HCT116 (cell line): ENCODE measurements at regions of chr13 and their contacts with region 1.

Region 1: DNA sequence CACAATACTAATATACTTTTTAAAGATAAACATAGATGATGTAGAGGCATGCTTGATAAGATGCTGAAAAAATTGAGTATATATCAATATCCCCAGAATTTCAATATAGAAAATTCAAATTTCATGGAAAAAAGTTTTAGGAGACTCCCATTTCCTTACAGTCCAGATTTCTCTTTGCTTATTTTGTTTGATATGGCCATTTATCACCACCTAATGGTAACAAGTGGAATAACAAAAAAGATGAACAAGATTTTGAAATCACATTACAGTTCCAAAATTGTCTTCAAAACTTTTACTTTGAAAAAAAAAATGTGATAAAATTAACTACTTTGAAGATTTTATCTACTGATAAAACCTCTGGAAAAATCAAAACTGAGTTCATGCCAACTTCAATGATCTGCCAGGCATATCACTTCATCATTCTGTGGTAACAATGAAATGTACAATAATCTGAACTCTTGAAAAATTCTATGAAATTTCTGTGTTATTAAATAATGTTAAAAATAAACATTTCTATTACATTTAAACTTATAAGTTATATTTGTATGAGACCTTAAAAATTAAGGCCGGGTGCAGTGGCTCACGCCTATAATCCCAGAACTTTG is 17.5 kb downstream of the MIPEP start:
- DNase-seq: no peak
- ATAC-seq: no peak
- H3K4me3 ChIP-seq: no peak overlapping the region
- H3K27ac ChIP-seq: no peak overlapping the region
- H3K4me1 ChIP-seq: 0 out of 4 replicates have a peak, but pooled peaks cover 0 to 2% of the 10 kb centered on the region in 2 experiments
- H3K27me3 ChIP-seq: no peaks in the 10 kb centered on the region
- CTCF ChIP-seq: peak; percentile 30 to 61 (median 37); a peak in 4 of 6 replicates
- POLR2A ChIP-seq: no peak
- RAD21 ChIP-seq: peak; percentile 54

Region 2: GRCh38 chr13:23510979-23511735 is 360.6 kb before region 1 on chr13:
- CTCF ChIA-PET with region 1: no interaction called
- POLR2A ChIA-PET with region 1: no interaction called
- RAD21 ChIA-PET with region 1: no interaction called
- intact Hi-C with region 1: loop called (anchors 5 kb)
- DNase-seq: peak; percentile 6
- ATAC-seq: peak; percentile 60
- H3K4me3 ChIP-seq: no peak overlapping the region
- H3K27ac ChIP-seq: no peak overlapping the region
- H3K4me1 ChIP-seq: peaks cover 0 to 4% of the 10 kb centered on the region in 2 experiments; a peak in 1 of 4 replicates
- H3K27me3 ChIP-seq: peaks cover 1% of the 10 kb centered on the region
- CTCF ChIP-seq: peak in 2 of 3 experiments; percentile 15 to 39; a peak in 3 of 6 replicates
- POLR2A ChIP-seq: no peak
- RAD21 ChIP-seq: peak; percentile 38

Region 3: DNA sequence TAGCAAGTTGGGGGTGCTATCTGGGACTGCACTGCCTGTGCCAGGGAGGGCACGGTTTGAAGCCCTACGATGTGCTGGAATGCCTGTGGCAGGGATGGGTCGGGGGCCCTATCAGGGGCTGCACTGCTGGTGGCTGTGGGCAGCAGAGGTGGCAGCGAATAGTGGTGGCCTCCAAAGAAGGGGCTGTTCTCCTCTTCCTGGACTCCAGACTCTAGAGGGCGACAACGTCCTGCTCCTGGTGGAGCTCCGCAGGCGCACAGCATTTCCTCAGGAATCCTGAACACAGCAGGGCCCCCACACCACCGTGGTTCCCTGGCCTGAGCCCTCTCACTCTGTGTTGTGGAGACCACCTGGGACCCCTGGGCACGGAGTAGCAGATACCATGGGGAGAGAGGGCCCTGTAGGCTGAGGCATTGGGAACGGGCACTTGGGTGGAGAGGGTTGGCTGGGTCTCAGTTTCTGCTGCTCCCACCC is 155.9 kb before region 1 on chr13:
- CTCF ChIA-PET with region 1: no interaction called
- POLR2A ChIA-PET with region 1: no interaction called
- RAD21 ChIA-PET with region 1: no interaction called
- intact Hi-C with region 1: loop called (anchors 5 kb)
- DNase-seq: peak; percentile 18
- ATAC-seq: peak; percentile 92
- H3K4me3 ChIP-seq: no peak overlapping the region
- H3K27ac ChIP-seq: no peak overlapping the region
- H3K4me1 ChIP-seq: no peaks in the 10 kb centered on the region
- H3K27me3 ChIP-seq: 0 out of 2 replicates have a peak, but pooled peaks cover 7% of the 10 kb centered on the region
- CTCF ChIP-seq: peak; percentile 16 to 61 (median 59); a peak in 4 of 6 replicates
- POLR2A ChIP-seq: no peak
- RAD21 ChIP-seq: peak; percentile 58